Calu3 (cell line): ENCODE measurements at regions of chr6 and their contacts with region 1.

Region 1: GRCh38 chr6:55734261-55734660 is 141.1 kb downstream of the BMP5 start:
- DNase-seq: no peak
- H3K4me3 Mint-ChIP-seq: no peak overlapping the region
- H3K27ac Mint-ChIP-seq: peak overlapping the region; percentile 43
- H3K4me1 Mint-ChIP-seq: peaks cover 18% of the 10 kb centered on the region
- H3K27me3 Mint-ChIP-seq: no peaks in the 10 kb centered on the region
- CTCF ChIP-seq: no peak

Region 2: GRCh38 chr6:55868771-55869479 is 134.7 kb after region 1 on chr6:
- CTCF ChIA-PET with region 1: no interaction called
- intact Hi-C with region 1: loop called (anchors 10 kb)
- DNase-seq: peak; percentile 54
- H3K4me3 Mint-ChIP-seq: no peak overlapping the region
- H3K27ac Mint-ChIP-seq: peak overlapping the region; percentile 86
- H3K4me1 Mint-ChIP-seq: peaks cover 42% of the 10 kb centered on the region
- H3K27me3 Mint-ChIP-seq: no peaks in the 10 kb centered on the region
- CTCF ChIP-seq: no peak